Common myeloid progenitor, CD34-positive (primary cell): ENCODE measurements at regions of chr12 and their contacts with region 1.

Region 1: DNA sequence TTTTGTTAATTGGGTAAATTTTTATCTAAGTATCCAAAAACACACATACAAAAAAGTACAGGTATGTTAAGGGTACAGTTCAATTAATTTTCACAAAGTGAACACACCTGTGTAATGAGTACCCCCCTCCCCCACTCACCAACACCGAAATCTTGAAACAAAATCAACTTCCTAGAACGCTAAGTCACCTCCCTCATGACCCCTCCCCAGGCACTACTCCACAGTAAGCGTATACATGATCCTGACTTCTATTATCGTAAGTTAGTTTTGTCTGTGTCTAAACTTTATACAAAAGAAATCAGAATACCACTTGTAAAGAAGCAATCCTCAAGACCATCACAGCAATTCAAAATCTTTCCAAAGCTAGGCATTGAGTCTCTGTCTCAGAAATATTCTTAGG is 100.5 kb downstream of the MED13L start:
- DNase-seq: no peak
- H3K4me3 ChIP-seq: no peak overlapping the region
- H3K27ac ChIP-seq: no peak overlapping the region
- H3K4me1 ChIP-seq: peaks cover 5 to 9% (median 8%) of the 10 kb centered on the region in 4 experiments
- H3K27me3 ChIP-seq: no peaks in the 10 kb centered on the region

Region 2: DNA sequence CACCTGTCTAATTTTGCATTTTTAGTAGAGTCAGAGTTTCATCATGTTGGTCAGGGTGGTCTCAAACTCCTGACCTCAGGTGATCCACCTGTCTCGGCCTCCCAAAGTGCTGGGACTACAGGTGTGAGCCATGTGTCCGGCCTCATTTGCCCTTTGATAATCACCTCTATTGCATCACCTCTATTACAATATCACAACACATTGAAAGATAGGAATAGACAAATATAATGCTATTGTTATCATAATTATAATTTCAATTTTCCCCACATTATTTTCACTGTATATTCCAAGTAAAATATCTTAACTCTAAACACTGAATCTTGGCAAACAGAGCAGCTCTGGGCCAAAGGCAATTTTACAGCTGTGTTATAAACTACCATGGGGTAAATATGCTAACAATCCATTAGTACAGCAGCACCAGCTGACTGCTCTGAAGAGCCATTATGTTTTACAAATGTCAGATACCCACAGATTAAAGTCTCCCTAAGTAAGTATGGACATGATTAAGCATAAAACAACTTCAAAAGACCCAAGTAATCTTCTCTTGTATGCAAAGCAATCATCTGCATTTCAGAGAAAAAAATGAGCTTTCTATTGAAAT is 72.8 kb before region 1 on chr12:
- CTCF ChIA-PET with region 1: no interaction called
- POLR2A ChIA-PET with region 1: no interaction called
- DNase-seq: no peak
- H3K4me3 ChIP-seq: no peak overlapping the region
- H3K27ac ChIP-seq: no peak overlapping the region
- H3K4me1 ChIP-seq: no peaks in the 10 kb centered on the region
- H3K27me3 ChIP-seq: no peaks in the 10 kb centered on the region

Region 3: DNA sequence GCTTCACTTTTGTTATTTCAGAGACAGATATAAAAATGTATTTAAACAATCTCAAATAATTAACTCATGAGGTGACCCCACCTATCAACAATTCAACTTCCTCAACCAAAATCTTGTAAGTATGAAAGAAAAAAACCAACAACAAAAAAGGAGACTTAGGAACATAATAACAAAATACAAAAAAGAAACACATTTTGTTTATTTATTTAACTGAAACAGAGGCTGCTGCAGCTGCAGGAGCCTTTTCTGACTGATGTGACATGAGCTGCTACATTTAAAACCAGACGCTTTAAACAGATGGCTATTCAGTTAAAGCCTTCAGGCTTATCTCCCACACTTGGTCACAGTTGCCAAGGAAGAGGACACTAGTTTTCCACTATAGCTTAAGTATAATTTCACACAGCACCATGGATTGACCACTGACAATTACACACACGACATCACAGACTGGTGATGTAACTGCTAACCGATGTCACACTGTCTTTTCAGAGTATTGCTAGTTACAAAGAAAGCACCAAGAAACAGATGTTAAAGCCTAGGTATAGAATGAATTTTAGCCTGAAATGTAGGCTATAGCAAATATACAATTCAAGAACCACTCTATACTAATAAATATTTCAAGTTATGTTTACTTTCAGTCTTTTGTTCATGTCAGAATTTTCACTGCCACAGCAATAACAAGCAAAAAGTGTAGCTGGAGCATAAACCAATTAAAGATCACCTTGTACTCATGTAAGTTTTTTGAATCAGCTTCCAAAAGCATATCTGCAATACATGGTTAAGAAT is 12.6 kb before region 1 on chr12:
- CTCF ChIA-PET with region 1: interaction called, 11 read pairs
- POLR2A ChIA-PET with region 1: interaction called, 5 read pairs
- DNase-seq: peak in 2 of 3 donors; percentile 54 to 72
- H3K4me3 ChIP-seq: no peak overlapping the region
- H3K27ac ChIP-seq: peak overlapping the region in 1 of 2 experiments; percentile 57
- H3K4me1 ChIP-seq: peaks cover 6 to 13% (median 12%) of the 10 kb centered on the region in 4 experiments
- H3K27me3 ChIP-seq: no peaks in the 10 kb centered on the region

Region 4: DNA sequence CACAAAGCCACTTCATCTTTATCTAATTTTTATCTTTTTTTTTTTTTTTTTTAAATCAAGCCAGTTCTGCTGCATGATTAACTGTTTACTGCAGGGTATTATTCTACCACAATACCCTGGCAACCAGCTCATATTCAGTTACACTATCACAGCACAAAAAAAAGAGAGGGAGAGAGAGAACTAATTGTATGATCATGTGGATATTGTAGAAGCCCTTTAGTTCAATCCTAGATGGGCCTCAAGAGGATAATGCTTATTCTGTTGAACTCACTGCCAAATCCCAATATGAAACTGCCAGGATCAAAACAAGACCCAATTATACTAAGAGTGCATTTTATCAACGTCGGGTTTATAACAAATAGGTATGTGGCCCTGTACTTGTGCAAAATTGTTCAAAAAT is 49.0 kb after region 1 on chr12:
- CTCF ChIA-PET with region 1: no interaction called
- POLR2A ChIA-PET with region 1: no interaction called
- DNase-seq: peak in 1 of 3 donors; percentile 40
- H3K4me3 ChIP-seq: no peak overlapping the region
- H3K27ac ChIP-seq: no peak overlapping the region
- H3K4me1 ChIP-seq: no peaks in the 10 kb centered on the region
- H3K27me3 ChIP-seq: no peaks in the 10 kb centered on the region

Region 5: DNA sequence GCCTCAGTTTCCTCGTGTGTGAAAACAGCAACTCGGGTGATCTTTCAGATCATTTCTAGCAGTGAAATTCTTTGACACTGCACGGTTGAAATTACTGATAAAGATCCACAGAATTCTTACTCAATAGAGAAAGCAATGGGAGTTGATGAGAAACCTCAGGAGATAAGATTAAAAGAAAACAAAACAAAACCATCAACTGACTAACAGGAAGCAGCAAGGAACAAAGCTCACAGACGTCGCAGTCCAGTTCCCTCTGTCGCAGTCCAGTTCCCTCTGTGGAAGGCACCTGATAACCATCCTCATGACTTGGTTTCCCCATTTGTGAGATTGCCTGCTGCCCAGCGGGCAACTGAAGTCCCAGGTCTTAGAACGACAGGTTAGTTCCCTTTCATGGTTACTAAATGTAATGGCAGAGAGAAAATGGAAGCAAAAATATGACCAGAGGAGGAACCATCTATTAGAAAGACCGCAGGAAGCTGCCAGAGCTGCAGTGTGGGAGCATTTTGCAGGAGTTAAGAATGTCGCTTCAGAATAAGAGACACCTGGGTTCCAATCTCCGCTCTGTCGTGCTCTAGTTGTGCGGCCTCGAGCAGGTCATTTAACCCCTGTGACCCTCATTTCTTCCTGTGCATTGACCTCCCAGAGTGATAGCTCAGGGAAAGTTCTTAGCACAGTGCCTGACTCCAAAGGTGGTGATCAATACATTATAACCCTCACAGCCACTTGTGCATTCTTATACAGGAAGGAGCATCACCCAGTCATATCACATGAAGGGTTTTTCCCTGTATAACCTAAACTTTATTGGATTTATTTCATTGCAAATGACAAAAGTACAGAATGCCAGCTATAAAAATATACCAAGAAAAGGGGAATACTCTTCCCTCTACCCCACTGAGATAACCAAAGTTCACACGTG is 105.6 kb after region 1 on chr12:
- CTCF ChIA-PET with region 1: no interaction called
- POLR2A ChIA-PET with region 1: no interaction called
- DNase-seq: peak in 2 of 3 donors; percentile 28 to 42
- H3K4me3 ChIP-seq: peak overlapping the region in 5 of 7 experiments; percentile 32 to 75 (median 36)
- H3K27ac ChIP-seq: peak overlapping the region in 1 of 2 experiments; percentile 56
- H3K4me1 ChIP-seq: peaks cover 16 to 40% (median 25%) of the 10 kb centered on the region in 4 experiments
- H3K27me3 ChIP-seq: no peaks in the 10 kb centered on the region